H1 (cell line): ENCODE measurements at regions of chr11 and their contacts with region 1.

Region 1: GRCh38 chr11:64652586-64653387 is 61.8 kb downstream of the SLC22A12 start:
- DNase-seq: peak; percentile 67 to 99
- H3K4me3 ChIP-seq: peak overlapping the region in 1 of 4 experiments; percentile 15; a peak in 1 of 8 replicates
- H3K27ac ChIP-seq: no peak overlapping the region
- H3K4me1 ChIP-seq: peaks cover 0 to 8% (median 5%) of the 10 kb centered on the region in 4 experiments; a peak in 3 of 7 replicates
- H3K27me3 ChIP-seq: peaks cover 0 to 5% (median 2%) of the 10 kb centered on the region in 4 experiments; a peak in 3 of 7 replicates
- CTCF ChIP-seq: peak; percentile 93 to 97 (median 94)
- EP300 ChIP-seq: no peak
- POLR2A ChIP-seq: no peak
- RAD21 ChIP-seq: peak; percentile 81 to 87

Region 2: GRCh38 chr11:64489831-64490441 is 162.9 kb before region 1 on chr11:
- CTCF ChIA-PET with region 1: interaction called, 201 read pairs
- POLR2A ChIA-PET with region 1: interaction called, 3 read pairs
- DNase-seq: peak; percentile 5 to 90
- H3K4me3 ChIP-seq: no peak overlapping the region
- H3K27ac ChIP-seq: no peak overlapping the region
- H3K4me1 ChIP-seq: no peaks in the 10 kb centered on the region; a peak in 2 of 7 replicates
- H3K27me3 ChIP-seq: peaks cover 3 to 21% (median 13%) of the 10 kb centered on the region in 4 experiments
- CTCF ChIP-seq: peak; percentile 82 to 95 (median 93)
- EP300 ChIP-seq: no peak
- POLR2A ChIP-seq: no peak
- RAD21 ChIP-seq: peak; percentile 89 to 91

Region 3: DNA sequence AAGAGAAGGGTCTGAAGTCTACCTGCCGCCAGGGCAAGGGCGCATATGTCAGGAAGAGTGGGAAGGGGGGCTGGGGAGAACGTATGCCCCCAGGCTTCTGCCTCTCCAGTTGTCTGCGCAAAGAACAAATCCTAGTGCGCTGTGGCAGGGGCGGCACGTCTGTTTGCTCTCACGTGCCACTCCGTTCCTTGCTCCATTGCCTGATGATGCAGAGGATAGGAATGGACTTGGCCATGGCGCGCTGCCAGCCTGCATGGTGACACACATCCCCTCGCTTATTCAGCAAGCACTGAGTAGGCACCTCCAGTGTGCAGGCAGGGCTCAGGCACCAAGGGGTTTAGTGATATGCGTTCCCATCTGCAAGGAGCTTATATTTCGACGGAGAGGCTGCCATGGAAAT is 107.2 kb before region 1 on chr11:
- CTCF ChIA-PET with region 1: interaction called, 84 read pairs
- POLR2A ChIA-PET with region 1: no interaction called
- DNase-seq: no peak
- H3K4me3 ChIP-seq: no peak overlapping the region
- H3K27ac ChIP-seq: no peak overlapping the region
- H3K4me1 ChIP-seq: no peaks in the 10 kb centered on the region
- H3K27me3 ChIP-seq: peaks cover 0 to 2% (median 1%) of the 10 kb centered on the region in 4 experiments; a peak in 3 of 7 replicates
- CTCF ChIP-seq: no peak
- EP300 ChIP-seq: no peak
- POLR2A ChIP-seq: no peak
- RAD21 ChIP-seq: no peak

Region 4: DNA sequence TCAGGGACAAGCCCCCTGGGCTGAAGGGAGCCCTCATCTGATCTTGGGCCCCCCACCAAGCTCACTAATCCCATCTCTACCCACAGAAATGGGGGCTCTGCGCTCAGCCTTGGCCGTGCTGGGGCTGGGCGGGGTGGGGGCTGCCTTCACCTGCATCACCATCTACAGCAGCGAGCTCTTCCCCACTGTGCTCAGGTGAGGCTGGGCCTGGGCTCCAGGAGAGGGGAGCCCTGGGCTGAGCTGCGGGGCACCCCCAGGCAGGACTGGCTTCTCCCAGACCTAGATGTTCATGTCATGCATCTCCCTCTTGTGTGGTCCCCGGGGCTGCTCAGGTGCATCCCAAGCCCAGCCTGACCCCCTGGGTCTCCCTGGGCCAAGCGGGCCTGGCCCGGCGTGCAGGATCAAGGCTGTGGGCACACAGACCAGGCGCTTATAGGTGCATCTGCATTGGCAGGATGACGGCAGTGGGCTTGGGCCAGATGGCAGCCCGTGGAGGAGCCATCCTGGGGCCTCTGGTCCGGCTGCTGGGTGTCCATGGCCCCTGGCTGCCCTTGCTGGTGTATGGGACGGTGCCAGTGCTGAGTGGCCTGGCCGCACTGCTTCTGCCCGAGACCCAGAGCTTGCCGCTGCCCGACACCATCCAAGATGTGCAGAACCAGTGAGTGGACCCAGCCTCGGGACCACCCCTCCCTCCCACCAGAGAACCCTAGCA is 52.4 kb before region 1 on chr11:
- CTCF ChIA-PET with region 1: interaction called, 26 read pairs
- POLR2A ChIA-PET with region 1: no interaction called
- DNase-seq: no peak
- H3K4me3 ChIP-seq: no peak overlapping the region
- H3K27ac ChIP-seq: no peak overlapping the region
- H3K4me1 ChIP-seq: no peaks in the 10 kb centered on the region; a peak in 1 of 7 replicates
- H3K27me3 ChIP-seq: no peaks in the 10 kb centered on the region
- CTCF ChIP-seq: no peak
- EP300 ChIP-seq: no peak
- POLR2A ChIP-seq: no peak
- RAD21 ChIP-seq: no peak

Region 5: GRCh38 chr11:64675450-64676260 is 22.9 kb after region 1 on chr11:
- CTCF ChIA-PET with region 1: interaction called, 68 read pairs
- POLR2A ChIA-PET with region 1: no interaction called
- DNase-seq: no peak
- H3K4me3 ChIP-seq: no peak overlapping the region
- H3K27ac ChIP-seq: no peak overlapping the region
- H3K4me1 ChIP-seq: no peaks in the 10 kb centered on the region; a peak in 1 of 7 replicates
- H3K27me3 ChIP-seq: peaks cover 0 to 3% (median 0%) of the 10 kb centered on the region in 4 experiments; a peak in 3 of 7 replicates
- CTCF ChIP-seq: no peak
- EP300 ChIP-seq: no peak
- POLR2A ChIP-seq: no peak
- RAD21 ChIP-seq: no peak

Region 6: GRCh38 chr11:64723907-64724862 is 71.4 kb after region 1 on chr11:
- CTCF ChIA-PET with region 1: interaction called, 18 read pairs
- POLR2A ChIA-PET with region 1: interaction called, 5 read pairs
- DNase-seq: no peak
- H3K4me3 ChIP-seq: peak overlapping the region in 1 of 4 experiments; percentile 83; a peak in 4 of 8 replicates
- H3K27ac ChIP-seq: no peak overlapping the region
- H3K4me1 ChIP-seq: peaks cover 10 to 33% (median 25%) of the 10 kb centered on the region in 4 experiments
- H3K27me3 ChIP-seq: peaks cover 7 to 20% (median 16%) of the 10 kb centered on the region in 4 experiments
- CTCF ChIP-seq: no peak
- EP300 ChIP-seq: no peak
- POLR2A ChIP-seq: no peak
- RAD21 ChIP-seq: no peak

Region 7: GRCh38 chr11:64894070-64894796 is 241.4 kb after region 1 on chr11:
- CTCF ChIA-PET with region 1: no interaction called
- POLR2A ChIA-PET with region 1: no interaction called
- DNase-seq: peak; percentile 50 to 98
- H3K4me3 ChIP-seq: no peak overlapping the region
- H3K27ac ChIP-seq: no peak overlapping the region
- H3K4me1 ChIP-seq: peaks cover 0 to 3% (median under 1%) of the 10 kb centered on the region in 4 experiments; a peak in 2 of 7 replicates
- H3K27me3 ChIP-seq: no peaks in the 10 kb centered on the region
- CTCF ChIP-seq: peak in 2 of 3 experiments; percentile 95 to 96; a peak in 3 of 4 replicates
- EP300 ChIP-seq: no peak
- POLR2A ChIP-seq: no peak
- RAD21 ChIP-seq: peak; percentile 71 to 81

Region 8: GRCh38 chr11:64916775-64917662 is 264.2 kb after region 1 on chr11 and contains the start of gene ATG2A:
- CTCF ChIA-PET with region 1: no interaction called
- POLR2A ChIA-PET with region 1: no interaction called
- DNase-seq: peak; percentile 97 to 98
- H3K4me3 ChIP-seq: peak within 1 kb of the TSS; percentile 74 to 97 (median 93)
- H3K27ac ChIP-seq: peak within 1 kb of the TSS; percentile 45
- H3K4me1 ChIP-seq: peaks cover 0 to 11% (median 4%) of the 10 kb centered on the region in 4 experiments; a peak in 5 of 7 replicates
- H3K27me3 ChIP-seq: no peaks in the 10 kb centered on the region
- CTCF ChIP-seq: no peak
- EP300 ChIP-seq: no peak
- POLR2A ChIP-seq: 0 out of 3 replicates have a peak, but pooled peaks of 1 of the 2 experiments have one; percentile 36
- RAD21 ChIP-seq: no peak
- total RNA-seq, gene ATG2A: 20.9 and 22.1 TPM in 2 replicates